Aorta (tissue), 5 donors: ENCODE measurements at regions of chr11 and their contacts with region 1.

Region 1: DNA sequence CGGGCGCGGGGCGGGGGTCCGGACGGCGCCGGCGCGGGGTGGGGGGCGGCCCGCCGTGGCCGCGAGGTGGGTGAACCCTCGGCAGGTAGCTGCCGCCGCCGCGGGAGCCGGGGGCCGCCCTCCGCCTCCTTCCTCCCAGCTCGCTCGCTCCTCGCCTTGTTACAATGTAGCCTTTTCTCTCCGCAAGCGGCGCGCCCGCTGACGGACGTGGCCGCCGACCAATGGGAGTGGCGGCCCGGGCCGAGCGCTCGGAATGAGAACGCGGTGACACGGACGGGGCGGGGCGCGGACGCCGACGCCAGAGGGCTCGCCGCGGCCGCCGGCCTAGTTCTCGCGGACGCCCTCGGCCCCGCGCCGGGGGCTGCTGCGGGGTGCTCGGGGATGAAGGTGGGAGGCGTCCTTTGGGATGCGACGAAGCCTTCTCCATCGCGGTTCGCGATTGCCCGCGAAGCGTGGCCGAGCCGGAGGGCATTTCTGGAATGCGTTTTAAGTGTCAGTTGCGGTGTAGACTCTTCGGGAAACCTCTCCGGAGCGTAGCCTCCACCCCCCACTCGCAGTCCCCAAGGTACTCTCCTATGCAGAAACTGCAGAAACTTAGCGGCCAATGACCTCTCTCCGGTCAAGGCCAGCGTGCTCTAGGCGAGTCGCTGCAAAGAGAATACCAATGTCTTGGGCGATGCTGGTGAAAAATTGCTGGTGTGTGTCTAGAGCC is 734 bp downstream of the PRDM11 start:
- DNase-seq: peak; percentile 96 to 98
- ATAC-seq: peak; percentile 94
- H3K4me3 ChIP-seq: peak overlapping the region; percentile 78 to 89
- H3K27ac ChIP-seq: peak overlapping the region; percentile 64 to 96
- H3K4me1 ChIP-seq: no peaks in the 10 kb centered on the region
- H3K27me3 ChIP-seq: no peaks in the 10 kb centered on the region

Region 2: DNA sequence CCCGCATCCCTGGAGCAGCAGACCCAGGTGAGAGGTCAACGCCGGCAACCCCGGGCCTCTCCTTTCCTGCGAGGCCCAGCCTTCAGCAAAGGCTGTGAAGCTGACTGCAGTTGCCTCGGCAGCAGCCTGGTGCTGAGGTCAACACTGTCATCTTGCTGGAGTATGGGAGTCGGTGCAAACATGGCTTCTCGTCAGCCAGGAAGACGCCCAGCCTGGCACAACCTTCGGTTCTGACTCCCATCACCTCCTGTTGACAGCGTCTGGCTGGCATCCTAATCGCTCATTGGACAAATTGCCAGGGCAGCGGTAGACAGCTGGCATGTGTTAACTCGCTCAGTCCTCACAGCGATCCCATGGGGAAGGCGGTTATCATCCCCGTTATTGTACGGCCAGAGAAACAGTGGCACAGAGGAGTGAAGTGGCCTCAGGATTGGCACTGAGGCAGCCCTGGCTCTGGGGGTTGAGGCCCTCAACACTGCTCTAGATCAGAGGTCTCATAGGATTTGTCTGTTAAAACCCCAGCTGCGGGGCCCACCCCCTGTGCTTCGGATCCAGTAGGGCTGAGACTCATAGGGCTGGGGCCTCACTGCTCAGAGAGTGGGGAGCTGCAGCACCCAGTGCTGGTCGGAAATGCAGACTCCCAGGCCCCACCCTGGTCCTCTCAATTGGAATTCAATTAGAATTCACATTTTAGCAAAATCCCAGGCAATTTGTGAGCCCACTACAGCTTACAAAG is 157.2 kb before region 1 on chr11:
- intact Hi-C with region 1: no loop called
- DNase-seq: peak in 1 of 2 donors; percentile 81
- ATAC-seq: peak; percentile 33
- H3K4me3 ChIP-seq: no peak overlapping the region
- H3K27ac ChIP-seq: no peak overlapping the region
- H3K4me1 ChIP-seq: no peaks in the 10 kb centered on the region
- H3K27me3 ChIP-seq: no peaks in the 10 kb centered on the region

Region 3: GRCh38 chr11:45180179-45180842 is 33.1 kb after region 1 on chr11:
- intact Hi-C with region 1: loop called (anchors 1 to 2 kb)
- DNase-seq: peak; percentile 61 to 86
- ATAC-seq: peak; percentile 77
- H3K4me3 ChIP-seq: peak overlapping the region; percentile 19 to 87
- H3K27ac ChIP-seq: peak overlapping the region; percentile 72 to 89
- H3K4me1 ChIP-seq: peaks cover 0 to 3% of the 10 kb centered on the region in 2 donors
- H3K27me3 ChIP-seq: no peaks in the 10 kb centered on the region

Region 4: DNA sequence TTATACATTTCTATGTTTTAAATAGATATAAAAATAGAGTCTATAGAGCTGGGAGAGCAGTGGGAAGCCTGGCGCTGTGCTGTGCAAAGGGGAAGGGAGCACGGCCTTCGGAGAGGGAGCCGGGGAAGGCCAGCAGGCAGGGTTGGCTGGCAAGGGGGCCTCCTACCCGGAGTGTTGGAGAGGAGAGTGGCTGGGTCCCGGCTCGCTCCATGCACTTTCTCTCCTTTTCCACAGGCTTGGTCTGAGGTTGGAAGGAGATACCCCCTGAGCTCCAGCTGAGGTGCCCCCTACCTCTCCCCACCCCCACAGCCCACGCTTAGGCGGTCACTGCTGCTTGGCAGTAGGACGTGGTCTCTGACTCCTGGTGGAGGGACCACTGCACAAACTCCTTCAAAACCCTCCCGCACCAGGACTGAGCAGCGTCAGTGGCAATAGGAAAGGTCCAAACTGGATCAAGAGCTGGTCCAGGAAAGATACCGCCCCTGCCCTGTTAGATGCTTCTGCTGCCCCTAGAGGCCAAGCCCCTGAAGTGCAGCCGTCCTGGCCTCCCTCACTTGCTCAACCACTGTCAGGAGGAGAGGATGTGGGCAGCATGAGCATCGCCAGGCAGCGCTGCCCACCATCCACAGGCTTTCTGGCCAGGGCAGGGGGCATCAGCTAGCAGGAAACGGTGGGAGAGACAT is 86.1 kb after region 1 on chr11:
- intact Hi-C with region 1: loop called in 1 of 2 experiments (anchors 10 kb)
- DNase-seq: peak; percentile 77 to 87
- ATAC-seq: peak; percentile 63
- H3K4me3 ChIP-seq: no peak overlapping the region
- H3K27ac ChIP-seq: no peak overlapping the region
- H3K4me1 ChIP-seq: no peaks in the 10 kb centered on the region
- H3K27me3 ChIP-seq: no peaks in the 10 kb centered on the region

Region 5: GRCh38 chr11:45280449-45280848 is 133.3 kb after region 1 on chr11:
- intact Hi-C with region 1: no loop called
- DNase-seq: no peak
- ATAC-seq: no peak
- H3K4me3 ChIP-seq: no peak overlapping the region
- H3K27ac ChIP-seq: no peak overlapping the region
- H3K4me1 ChIP-seq: no peaks in the 10 kb centered on the region
- H3K27me3 ChIP-seq: no peaks in the 10 kb centered on the region